ENCODE measurements at regions of chr14 and their contacts with region 1.

Region 1: GRCh38 chr14:22556990-22557623 is 31.9 kb downstream of the DAD1 start:
- DNase-seq: peak; percentile 64
- ATAC-seq: peak; percentile 94
- H3K4me3 ChIP-seq: peak overlapping the region; percentile 36
- H3K27ac ChIP-seq: peak overlapping the region; percentile 86
- H3K4me1 ChIP-seq: peaks cover 13% of the 10 kb centered on the region
- H3K27me3 ChIP-seq: no peaks in the 10 kb centered on the region
- CTCF ChIP-seq: peak; percentile 79
- POLR2A ChIP-seq: no peak
- RAD21 ChIP-seq: peak; percentile 79

Region 2: GRCh38 chr14:22386924-22387775 is 170.0 kb before region 1 on chr14:
- CTCF ChIA-PET with region 1: interaction called, 3 read pairs
- POLR2A ChIA-PET with region 1: no interaction called
- dilution Hi-C with region 1: no loop called
- in situ Hi-C with region 1: loop called (anchors 5 kb)
- intact Hi-C with region 1: loop called (anchors 1 kb)
- DNase-seq: peak; percentile 72
- ATAC-seq: peak; percentile 83
- H3K4me3 ChIP-seq: no peak overlapping the region
- H3K27ac ChIP-seq: no peak overlapping the region
- H3K4me1 ChIP-seq: no peaks in the 10 kb centered on the region; the same call in 1 of the 2 replicates
- H3K27me3 ChIP-seq: peaks cover 8% of the 10 kb centered on the region
- CTCF ChIP-seq: peak; percentile 85
- POLR2A ChIP-seq: no peak
- RAD21 ChIP-seq: peak; percentile 88

Region 3: DNA sequence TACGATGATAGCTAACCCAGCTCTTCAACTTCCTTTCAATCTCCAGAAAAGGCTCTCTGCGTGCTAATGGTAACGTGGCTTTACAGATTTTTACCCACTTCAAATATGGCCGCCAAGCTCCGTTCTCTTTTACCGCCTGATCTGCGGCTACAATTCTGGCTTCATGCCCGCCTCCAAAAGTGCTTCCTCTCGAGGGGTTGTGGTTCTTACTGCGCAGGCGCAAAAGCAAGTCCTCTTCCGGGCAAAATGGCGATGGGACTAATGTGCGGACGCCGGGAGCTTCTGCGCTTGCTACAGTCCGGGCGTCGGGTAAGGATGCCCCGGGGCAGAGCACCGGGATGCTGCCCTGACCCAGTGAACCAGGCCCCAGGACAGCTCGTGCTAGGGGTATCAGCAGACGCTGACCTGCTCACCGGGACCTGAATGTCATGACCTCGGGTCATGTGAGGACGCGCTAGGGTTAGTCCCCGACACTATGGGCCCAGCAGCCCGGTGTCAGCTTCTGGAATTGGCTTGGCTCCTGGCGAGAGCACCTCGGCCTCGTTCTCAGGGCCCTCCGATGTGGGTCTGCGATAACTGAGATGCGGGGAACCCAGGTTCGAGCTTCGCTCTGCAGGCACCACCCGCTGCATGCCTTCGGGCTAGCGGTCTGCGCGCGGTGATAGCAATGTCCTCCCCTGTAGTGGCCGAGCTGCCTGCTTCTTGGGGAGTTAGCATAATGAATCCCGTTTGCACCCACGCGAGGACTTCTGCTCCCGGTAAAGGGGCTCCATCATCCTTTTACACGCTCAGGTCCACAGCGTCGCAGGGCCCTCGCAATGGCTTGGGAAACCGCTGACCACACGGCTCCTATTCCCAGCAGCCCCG is 209.6 kb after region 1 on chr14 and contains the start of gene OXA1L:
- CTCF ChIA-PET with region 1: no interaction called
- POLR2A ChIA-PET with region 1: no interaction called
- dilution Hi-C with region 1: no loop called
- in situ Hi-C with region 1: loop called (anchors 10 kb)
- intact Hi-C with region 1: loop called (anchors 5 kb)
- DNase-seq: peak; percentile 98
- ATAC-seq: peak; percentile 85
- H3K4me3 ChIP-seq: peak within 1 kb of the TSS; percentile 90
- H3K27ac ChIP-seq: peak within 1 kb of the TSS; percentile 92
- H3K4me1 ChIP-seq: peaks cover 5% of the 10 kb centered on the region
- H3K27me3 ChIP-seq: no peaks in the 10 kb centered on the region
- CTCF ChIP-seq: no peak
- POLR2A ChIP-seq: peak; percentile 72
- RAD21 ChIP-seq: no peak
- total RNA-seq, gene OXA1L: 40.0 and 47.3 TPM in 2 replicates

Region 4: DNA sequence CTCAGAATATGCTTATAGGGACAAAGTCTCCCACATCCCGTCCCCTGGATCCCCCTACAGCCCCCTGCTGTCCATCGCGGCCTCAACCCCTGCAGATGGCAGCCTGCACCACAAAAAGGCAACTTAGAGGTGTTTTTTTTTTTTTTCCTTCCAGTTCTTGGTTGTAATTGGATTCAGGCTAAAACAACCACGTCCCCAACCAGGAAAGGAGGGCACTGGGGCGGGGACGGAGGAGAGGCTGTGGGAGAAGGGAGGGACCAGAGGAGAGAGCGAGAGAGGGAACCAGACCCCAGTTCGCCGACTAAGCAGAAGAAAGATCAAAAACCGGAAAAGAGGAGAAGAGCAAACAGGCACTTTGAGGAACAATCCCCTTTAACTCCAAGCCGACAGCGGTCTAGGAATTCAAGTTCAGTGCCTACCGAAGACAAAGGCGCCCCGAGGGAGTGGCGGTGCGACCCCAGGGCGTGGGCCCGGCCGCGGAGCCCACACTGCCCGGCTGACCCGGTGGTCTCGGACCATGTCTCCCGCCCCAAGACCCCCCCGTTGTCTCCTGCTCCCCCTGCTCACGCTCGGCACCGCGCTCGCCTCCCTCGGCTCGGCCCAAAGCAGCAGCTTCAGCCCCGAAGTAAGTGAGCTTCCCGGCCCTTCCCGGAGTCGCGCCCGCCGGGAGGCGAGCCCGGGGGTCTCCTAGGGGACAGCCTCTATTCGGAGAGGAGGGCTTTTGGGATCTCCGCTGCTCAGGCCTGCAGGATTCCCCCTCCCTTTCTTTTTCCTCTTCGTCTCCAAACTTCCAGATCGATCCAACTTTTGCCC is 279.4 kb after region 1 on chr14 and contains the start of gene MMP14:
- CTCF ChIA-PET with region 1: no interaction called
- POLR2A ChIA-PET with region 1: no interaction called
- dilution Hi-C with region 1: no loop called
- in situ Hi-C with region 1: no loop called
- intact Hi-C with region 1: loop called (anchors 5 kb)
- DNase-seq: peak; percentile 89
- ATAC-seq: peak; percentile 77
- H3K4me3 ChIP-seq: peak within 1 kb of the TSS; percentile 64
- H3K27ac ChIP-seq: peak within 1 kb of the TSS; percentile 96
- H3K4me1 ChIP-seq: peaks cover 13% of the 10 kb centered on the region
- H3K27me3 ChIP-seq: no peaks in the 10 kb centered on the region
- CTCF ChIP-seq: peak; percentile 68
- POLR2A ChIP-seq: peak; percentile 88
- RAD21 ChIP-seq: peak; percentile 61
- total RNA-seq, gene MMP14: 124 and 156 TPM in 2 replicates

Region 5: GRCh38 chr14:22900081-22900799 is 343.1 kb after region 1 on chr14:
- CTCF ChIA-PET with region 1: no interaction called
- POLR2A ChIA-PET with region 1: no interaction called
- dilution Hi-C with region 1: no loop called
- in situ Hi-C with region 1: loop called (anchors 5 kb)
- intact Hi-C with region 1: loop called (anchors 1 kb)
- DNase-seq: peak; percentile 78
- ATAC-seq: peak; percentile 81
- H3K4me3 ChIP-seq: no peak overlapping the region
- H3K27ac ChIP-seq: no peak overlapping the region
- H3K4me1 ChIP-seq: peaks cover 17% of the 10 kb centered on the region
- H3K27me3 ChIP-seq: no peaks in the 10 kb centered on the region
- CTCF ChIP-seq: peak; percentile 74
- POLR2A ChIP-seq: no peak
- RAD21 ChIP-seq: peak; percentile 71

Region 6: DNA sequence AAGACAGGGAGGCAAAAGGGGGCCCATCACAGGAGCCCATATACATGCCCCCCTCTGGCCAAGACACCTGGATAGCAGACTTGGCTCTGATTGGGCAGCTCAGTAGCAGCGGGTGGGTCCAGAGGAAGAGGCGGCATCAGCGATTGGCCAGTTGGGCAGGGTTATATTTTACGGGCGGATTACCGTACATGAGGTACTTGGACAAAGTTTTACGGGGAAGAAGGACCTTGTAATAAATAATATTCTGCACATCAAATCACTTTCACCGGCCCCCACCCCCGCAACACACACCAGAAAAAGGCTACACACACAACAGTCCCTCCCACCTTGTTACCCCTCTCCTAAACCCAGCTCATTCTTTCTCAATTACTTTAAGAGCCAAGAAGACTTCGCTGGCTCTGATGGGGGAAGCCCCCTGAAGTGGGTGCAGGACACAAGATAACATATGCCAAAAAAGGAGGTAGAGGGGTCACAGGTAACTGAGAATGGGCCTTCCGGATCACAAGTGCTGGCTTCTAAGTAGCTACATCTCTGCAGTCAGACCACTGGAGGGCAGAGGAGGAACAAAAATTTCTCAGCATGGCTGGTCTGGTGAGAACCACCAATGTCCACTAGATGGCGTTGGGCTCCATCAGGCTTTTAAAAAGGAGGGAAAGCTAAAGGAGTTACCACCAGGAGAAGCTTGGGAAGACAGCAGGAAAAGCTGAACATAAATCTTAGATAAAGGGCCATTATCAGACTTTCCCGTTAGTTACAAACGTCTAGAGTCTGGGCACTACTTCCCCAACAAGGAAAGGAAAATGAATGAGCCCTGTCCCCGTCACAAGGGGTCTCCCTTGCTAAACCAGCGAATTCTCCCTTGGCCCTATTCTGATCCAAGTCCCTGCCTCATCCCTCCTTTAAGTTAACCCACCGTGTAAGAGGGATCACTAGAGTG is 511.6 kb after region 1 on chr14:
- CTCF ChIA-PET with region 1: no interaction called
- POLR2A ChIA-PET with region 1: no interaction called
- dilution Hi-C with region 1: no loop called
- in situ Hi-C with region 1: loop called (anchors 10 kb)
- intact Hi-C with region 1: no loop called
- DNase-seq: peak; percentile 93
- ATAC-seq: peak; percentile 69
- H3K4me3 ChIP-seq: no peak overlapping the region
- H3K27ac ChIP-seq: peak overlapping the region; percentile 14
- H3K4me1 ChIP-seq: peaks cover 13% of the 10 kb centered on the region
- H3K27me3 ChIP-seq: no peaks in the 10 kb centered on the region
- CTCF ChIP-seq: peak; percentile 100
- POLR2A ChIP-seq: no peak
- RAD21 ChIP-seq: peak; percentile 80